Heart right ventricle (tissue), 16 donors: ENCODE measurements at regions of chr1 and their contacts with region 1.

Region 1: GRCh38 chr1:151839457-151840405 is at the start of gene C2CD4D:
- DNase-seq: peak in 1 of 2 donors; percentile 31
- ATAC-seq: peak; percentile 45 to 69 (median 58)
- H3K4me3 ChIP-seq: peak within 1 kb of the TSS in 9 of 10 donors; percentile 36 to 58 (median 50)
- H3K27ac ChIP-seq: peak within 1 kb of the TSS in 5 of 10 donors; percentile 20 to 56 (median 47)
- H3K4me1 ChIP-seq: peaks cover 6 to 29% (median 21%) of the 10 kb centered on the region in 9 donors
- H3K27me3 ChIP-seq: peaks cover 13 to 66% (median 44%) of the 10 kb centered on the region in 7 donors
- CTCF ChIP-seq: no peak
- total RNA-seq, gene C2CD4D: not detected

Region 2: DNA sequence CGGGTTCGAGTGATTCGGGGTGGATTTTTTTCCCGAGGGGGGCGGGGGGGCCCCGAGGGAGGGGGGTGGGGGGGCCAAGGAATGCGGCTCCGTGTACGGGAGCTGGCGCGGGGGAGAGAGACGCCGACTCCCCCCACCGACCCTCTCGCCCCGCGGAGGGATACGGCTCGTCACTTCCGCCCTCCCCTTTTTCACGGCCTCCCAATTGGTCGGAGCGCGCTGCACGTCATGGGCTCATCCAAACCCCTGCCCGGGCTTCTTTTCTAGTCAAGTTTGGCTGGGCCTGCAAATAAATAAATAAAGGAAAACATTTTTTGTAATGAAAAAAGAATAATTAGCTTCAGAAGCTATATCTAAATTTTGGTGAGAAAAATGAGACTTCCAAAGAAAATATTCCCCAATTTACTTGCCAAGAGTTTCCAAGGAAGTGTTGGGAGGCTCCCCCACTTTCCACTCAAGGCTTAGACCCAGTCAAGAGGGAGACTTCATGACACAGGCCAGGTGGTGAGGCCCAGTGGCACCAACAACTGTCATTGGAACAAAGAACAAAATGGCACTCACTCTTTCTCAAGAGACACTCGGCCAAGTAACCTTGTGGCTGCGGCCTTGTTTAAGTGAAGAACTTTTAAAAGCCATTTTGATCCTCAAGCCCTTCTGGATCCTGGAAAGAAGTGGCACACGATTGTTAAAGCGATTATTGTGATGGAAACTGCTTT is 380.2 kb before region 1 on chr1 and contains the start of gene POGZ:
- intact Hi-C with region 1: loop called in 1 of 10 experiments (anchors 10 kb)
- DNase-seq: peak; percentile 97 to 99
- ATAC-seq: peak; percentile 94 to 99 (median 97)
- H3K4me3 ChIP-seq: peak within 1 kb of the TSS; percentile 54 to 84 (median 74)
- H3K27ac ChIP-seq: peak within 1 kb of the TSS; percentile 93 to 99 (median 96)
- H3K4me1 ChIP-seq: peaks cover 9 to 40% (median 32%) of the 10 kb centered on the region in 9 donors
- H3K27me3 ChIP-seq: peaks cover 0 to 7% (median 0%) of the 10 kb centered on the region in 7 donors
- CTCF ChIP-seq: no peak
- total RNA-seq, gene POGZ: 36.7 to 58.6 (median 48.9) TPM

Region 3: DNA sequence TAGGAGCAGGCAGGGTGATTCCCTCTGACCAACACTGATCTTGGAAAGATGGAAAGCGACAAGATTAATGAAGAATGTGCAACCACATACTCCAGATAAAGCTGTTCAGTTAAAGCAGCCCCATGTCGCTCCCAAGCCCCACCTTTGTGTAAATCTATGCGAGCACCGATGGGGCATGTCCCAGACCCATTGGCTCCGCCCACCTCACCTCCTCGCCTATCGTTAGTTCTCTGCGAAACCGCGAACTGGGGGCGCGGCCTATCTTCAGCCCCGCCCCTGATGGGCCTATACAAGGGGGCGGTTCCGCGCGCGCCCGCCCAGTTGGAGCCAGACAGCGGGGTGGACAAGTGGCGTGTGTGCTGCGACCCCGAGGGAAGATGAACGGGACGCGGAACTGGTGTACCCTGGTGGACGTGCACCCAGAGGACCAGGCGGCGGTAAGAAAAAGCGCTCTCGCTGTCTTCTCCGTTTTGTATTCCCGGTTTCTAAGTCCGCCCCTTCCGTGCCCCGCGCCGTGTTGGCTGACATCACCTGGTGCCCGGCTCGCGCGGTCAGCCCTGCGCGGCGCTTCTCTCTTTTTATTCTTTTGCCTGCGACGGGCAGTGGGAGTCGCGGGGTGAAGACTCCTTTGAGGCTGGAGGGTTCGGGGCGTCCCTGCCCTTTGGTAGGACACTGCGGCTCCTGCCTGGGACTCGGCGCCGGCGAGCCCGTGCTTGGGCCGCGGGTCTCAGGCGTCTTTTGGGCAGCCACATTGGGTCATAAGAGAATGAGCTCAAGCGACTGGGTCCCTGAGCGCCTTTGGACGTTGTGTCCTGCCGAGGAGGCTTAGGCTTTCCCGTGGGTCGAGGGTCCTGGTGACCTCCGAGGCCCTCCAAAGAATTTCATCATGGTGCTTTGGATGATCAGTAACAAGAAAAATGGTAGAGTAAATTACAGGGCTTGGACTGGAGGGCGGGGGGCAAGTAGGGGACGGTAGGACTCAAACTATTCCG is 299.4 kb before region 1 on chr1 and contains the start of gene TUFT1:
- intact Hi-C with region 1: loop called in 2 of 10 experiments (anchors 10 kb)
- DNase-seq: peak; percentile 89 to 91
- ATAC-seq: peak; percentile 97 to 98 (median 98)
- H3K4me3 ChIP-seq: peak within 1 kb of the TSS; percentile 48 to 86 (median 70)
- H3K27ac ChIP-seq: peak within 1 kb of the TSS in 8 of 10 donors; percentile 30 to 79 (median 59)
- H3K4me1 ChIP-seq: peaks cover 0 to 24% (median 12%) of the 10 kb centered on the region in 9 donors
- H3K27me3 ChIP-seq: peaks cover 0 to 11% (median 0%) of the 10 kb centered on the region in 7 donors
- CTCF ChIP-seq: no peak
- total RNA-seq, gene TUFT1: 2.9 to 13.0 (median 5.5) TPM

Region 4: DNA sequence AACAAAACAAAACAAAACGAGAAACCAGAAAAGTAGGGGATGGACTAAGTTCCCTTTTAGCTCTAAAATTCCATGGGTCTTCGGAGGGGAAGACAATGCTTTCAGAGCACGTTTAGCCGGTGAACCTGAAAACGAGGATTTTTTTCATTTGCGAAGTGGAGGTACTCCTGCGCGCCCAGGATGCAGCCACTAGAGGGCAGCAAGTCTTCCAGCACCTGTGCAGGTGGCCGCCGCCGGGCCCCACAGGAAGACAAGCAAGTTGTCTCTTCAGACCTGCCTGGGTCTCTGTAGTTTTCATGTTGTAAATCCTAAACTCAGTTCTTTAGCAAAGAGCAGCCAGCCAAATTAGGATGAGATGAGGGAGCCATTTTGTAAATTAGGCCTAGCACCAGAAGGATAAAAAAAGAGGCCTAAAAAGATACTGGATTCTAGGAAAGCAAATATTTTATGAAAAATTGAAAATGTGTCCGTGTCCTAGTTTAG is 245.5 kb before region 1 on chr1:
- intact Hi-C with region 1: loop called in 5 of 10 experiments (anchors 5 to 10 kb)
- DNase-seq: peak; percentile 67 to 73
- ATAC-seq: peak in 6 of 8 donors; percentile 55 to 76 (median 62)
- H3K4me3 ChIP-seq: peak overlapping the region in 4 of 10 donors; percentile 15 to 30 (median 16)
- H3K27ac ChIP-seq: no peak overlapping the region
- H3K4me1 ChIP-seq: peaks cover 0 to 12% (median 0%) of the 10 kb centered on the region in 9 donors
- H3K27me3 ChIP-seq: no peaks in the 10 kb centered on the region
- CTCF ChIP-seq: peak; percentile 72 to 95 (median 92)

Region 5: DNA sequence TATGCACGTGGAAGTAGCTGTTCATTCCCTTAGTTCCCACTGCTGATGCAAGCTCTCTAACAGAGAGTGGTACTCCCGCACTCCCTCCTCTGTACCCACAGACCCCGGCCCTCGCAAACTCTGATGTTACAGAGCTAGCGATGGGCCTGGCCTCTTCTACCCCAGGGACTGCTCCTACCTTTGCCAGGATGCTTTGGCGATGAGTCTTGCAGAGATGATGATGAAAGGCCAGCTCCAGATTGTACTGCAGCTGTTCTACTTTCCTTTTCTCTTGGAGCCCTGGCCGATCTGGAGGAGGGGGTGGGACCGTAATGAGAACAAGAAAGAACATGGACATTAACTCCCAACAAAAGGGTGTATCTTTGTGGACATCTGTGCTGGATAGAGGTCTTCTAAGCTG is 28.6 kb before region 1 on chr1:
- intact Hi-C with region 1: no loop called
- DNase-seq: no peak
- ATAC-seq: peak in 1 of 8 donors; percentile 45
- H3K4me3 ChIP-seq: no peak overlapping the region
- H3K27ac ChIP-seq: no peak overlapping the region
- H3K4me1 ChIP-seq: no peaks in the 10 kb centered on the region
- H3K27me3 ChIP-seq: no peaks in the 10 kb centered on the region
- CTCF ChIP-seq: no peak